ENCODE measurements at regions of chr6 and their contacts with region 1.

Region 1: DNA sequence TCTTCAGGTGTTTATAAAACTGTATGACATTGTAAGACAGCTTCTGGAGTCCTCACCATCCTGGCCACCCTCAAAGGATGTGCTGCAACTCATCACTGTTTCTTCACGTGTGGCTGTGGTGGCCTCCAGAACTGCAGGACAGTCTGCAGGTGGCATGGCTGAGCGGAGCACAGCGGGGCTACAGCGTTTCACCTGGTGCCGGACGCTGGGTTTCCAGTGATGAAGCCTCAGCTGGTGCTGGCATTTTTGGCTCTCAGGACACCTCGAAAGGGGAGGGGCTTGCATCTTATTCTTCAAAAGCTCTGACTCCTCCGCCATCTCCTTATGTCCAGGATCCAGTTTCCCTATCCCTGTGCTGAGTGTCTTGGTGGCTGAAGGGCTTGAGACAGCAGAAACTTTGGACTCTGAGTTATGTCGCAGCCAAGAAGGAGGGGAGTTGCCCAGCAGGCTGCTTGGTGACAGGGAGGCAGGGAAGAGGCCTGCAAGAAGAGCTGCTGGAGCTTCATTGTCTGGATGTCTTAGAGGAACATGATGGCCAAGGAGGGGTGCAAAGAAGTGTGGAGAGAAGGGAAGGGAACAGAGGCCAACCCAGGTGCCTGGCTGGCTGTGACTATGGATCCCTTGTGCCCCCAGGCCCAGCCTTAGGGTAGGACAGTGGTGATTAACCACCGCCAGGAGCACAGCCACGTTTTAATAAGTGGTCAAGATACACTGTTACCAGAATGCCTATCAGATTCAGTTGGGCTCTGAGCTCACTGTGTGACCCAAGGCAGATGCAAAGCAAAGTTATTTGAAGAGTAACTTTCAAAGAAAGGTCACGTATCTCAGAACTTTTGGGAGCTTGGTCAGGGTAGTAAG is 58.7 kb downstream of the GTF2H5 start:
- DNase-seq: no peak
- H3K4me3 ChIP-seq: no peak overlapping the region
- H3K27ac ChIP-seq: no peak overlapping the region
- H3K4me1 ChIP-seq: peaks cover 0 to 2% (median 0%) of the 10 kb centered on the region in 4 experiments; a peak in 1 of 7 replicates
- H3K27me3 ChIP-seq: no peaks in the 10 kb centered on the region; a peak in 1 of 7 replicates
- CTCF ChIP-seq: no peak
- EP300 ChIP-seq: no peak
- POLR2A ChIP-seq: no peak
- RAD21 ChIP-seq: no peak; a peak in 1 of 4 replicates

Region 2: GRCh38 chr6:157867155-157867559 is 359.7 kb before region 1 on chr6:
- CTCF ChIA-PET with region 1: no interaction called
- POLR2A ChIA-PET with region 1: no interaction called
- DNase-seq: no peak
- H3K4me3 ChIP-seq: no peak overlapping the region
- H3K27ac ChIP-seq: no peak overlapping the region
- H3K4me1 ChIP-seq: peaks cover 0 to 7% (median 0%) of the 10 kb centered on the region in 4 experiments; a peak in 1 of 7 replicates
- H3K27me3 ChIP-seq: no peaks in the 10 kb centered on the region
- CTCF ChIP-seq: no peak
- EP300 ChIP-seq: no peak
- POLR2A ChIP-seq: no peak
- RAD21 ChIP-seq: no peak

Region 3: DNA sequence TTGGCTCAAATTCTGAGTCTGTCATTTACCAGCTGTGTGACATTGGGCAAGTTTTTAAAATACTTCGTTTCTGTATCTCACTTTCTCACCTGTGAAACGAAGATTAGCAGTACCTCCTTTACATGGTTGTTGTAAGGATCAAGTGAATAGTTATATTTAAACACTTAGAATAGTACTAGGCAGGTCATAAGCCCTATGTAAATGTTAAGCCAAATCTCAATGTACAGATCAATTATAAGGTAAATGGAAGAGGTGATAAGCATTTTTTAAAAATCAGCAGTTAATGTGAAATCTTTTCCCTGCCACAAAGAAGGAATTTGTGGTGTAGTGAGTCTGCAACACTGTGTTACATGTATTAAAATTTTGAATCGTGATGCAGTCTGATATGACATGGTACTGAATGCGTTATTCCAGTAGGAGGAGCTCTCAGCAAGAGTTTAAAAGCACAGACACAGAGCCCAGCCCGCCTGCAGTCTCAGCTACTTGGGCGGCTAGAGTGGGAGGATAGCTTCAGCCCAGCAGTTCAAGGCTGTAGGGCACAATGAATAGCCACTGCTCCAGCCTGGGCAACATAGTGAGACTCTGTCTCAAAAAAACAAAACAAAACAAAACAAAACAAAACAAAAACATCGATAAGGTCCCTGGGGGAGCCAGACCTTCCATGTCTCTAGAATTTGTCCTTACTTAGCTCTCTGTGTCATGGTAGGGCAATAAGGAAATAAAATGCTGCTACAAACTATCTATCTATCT is 12.8 kb before region 1 on chr6:
- CTCF ChIA-PET with region 1: interaction called, 15 read pairs
- POLR2A ChIA-PET with region 1: no interaction called
- DNase-seq: no peak
- H3K4me3 ChIP-seq: no peak overlapping the region
- H3K27ac ChIP-seq: no peak overlapping the region
- H3K4me1 ChIP-seq: no peaks in the 10 kb centered on the region
- H3K27me3 ChIP-seq: no peaks in the 10 kb centered on the region
- CTCF ChIP-seq: peak; percentile 38 to 86 (median 79)
- EP300 ChIP-seq: no peak
- POLR2A ChIP-seq: no peak
- RAD21 ChIP-seq: peak; percentile 93 to 94

Region 4: DNA sequence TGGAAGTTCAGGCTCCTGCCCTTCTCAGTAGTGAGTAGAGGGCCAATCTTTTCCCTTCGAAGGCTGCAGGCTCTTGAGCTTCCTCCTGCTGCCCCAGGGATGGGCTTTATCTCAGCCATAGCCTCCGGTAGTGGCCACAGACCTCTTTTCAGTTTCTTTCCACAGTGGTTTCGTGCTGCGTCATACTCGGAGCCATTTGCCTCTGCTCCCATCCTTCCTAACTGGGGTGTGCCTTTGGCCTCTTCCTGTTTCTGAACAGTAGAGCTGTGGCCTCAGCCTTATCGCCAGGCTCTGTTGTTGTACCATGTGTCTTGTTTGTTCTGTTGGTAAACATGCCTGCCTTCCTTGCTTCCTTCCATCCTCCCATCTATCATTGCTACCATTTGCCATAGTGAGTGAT is 139.5 kb after region 1 on chr6:
- CTCF ChIA-PET with region 1: no interaction called
- POLR2A ChIA-PET with region 1: no interaction called
- DNase-seq: no peak
- H3K4me3 ChIP-seq: no peak overlapping the region
- H3K27ac ChIP-seq: no peak overlapping the region
- H3K4me1 ChIP-seq: no peaks in the 10 kb centered on the region
- H3K27me3 ChIP-seq: no peaks in the 10 kb centered on the region
- CTCF ChIP-seq: no peak
- EP300 ChIP-seq: no peak
- POLR2A ChIP-seq: no peak
- RAD21 ChIP-seq: no peak